ENCODE measurements at regions of chr1 and their contacts with region 1.

Region 1: GRCh38 chr1:93629099-93630059 is 52.3 kb downstream of the BCAR3 start:
- DNase-seq: no peak
- H3K27ac ChIP-seq: peak overlapping the region; percentile 63
- CTCF ChIP-seq: peak; percentile 84

Region 2: GRCh38 chr1:93844262-93845045 is 215.1 kb after region 1 on chr1:
- CTCF ChIA-PET with region 1: interaction called, 12 read pairs
- POLR2A ChIA-PET with region 1: interaction called, 3 read pairs
- DNase-seq: peak; percentile 73
- H3K27ac ChIP-seq: peak overlapping the region; percentile 57
- CTCF ChIP-seq: peak; percentile 85